ENCODE measurements at regions of chr1 and their contacts with region 1.

Region 1: DNA sequence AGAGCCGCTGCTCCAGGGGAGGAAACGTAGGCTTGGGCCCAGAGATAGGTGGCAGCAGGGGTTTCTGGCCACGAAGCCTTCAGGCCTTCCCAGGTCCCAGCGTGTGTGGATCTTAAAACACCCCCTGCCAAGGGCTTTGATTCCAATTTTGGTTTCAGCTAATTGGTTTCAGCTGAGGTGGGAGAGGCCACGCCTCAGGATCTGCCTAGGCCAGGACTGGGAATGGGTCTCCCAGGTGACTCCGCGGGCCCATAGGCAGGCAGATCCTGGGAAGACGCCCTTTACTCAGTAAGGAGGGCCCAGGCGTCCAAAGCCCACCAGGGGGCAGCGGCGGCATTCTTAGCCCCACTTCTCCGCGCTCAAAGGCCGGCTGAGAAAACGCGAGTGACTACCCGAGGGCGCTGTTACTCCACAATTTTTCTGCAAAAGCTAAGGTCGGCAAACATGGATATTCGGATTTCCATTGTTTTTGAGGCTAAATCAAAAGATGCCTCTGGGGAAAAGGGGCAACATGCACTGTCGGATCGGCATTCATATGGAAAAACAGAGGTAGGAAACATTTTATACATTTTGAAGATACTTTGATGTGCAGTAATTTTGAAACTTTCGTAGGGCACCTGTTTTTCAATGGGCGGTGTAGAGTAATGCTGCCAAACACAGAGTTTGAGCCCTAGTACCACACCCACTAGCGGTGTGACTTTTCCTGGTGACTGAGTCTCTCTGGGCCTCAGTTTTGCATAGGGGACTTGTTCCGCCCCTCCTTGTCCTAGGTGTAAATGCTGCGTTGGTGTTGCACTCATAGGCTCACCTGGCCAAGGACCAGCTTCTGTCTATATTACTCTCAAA is 31.8 kb upstream of the BCL10 start:
- DNase-seq: peak; percentile 82
- H3K4me3 ChIP-seq: no peak overlapping the region
- CTCF ChIP-seq: peak; percentile 98

Region 2: DNA sequence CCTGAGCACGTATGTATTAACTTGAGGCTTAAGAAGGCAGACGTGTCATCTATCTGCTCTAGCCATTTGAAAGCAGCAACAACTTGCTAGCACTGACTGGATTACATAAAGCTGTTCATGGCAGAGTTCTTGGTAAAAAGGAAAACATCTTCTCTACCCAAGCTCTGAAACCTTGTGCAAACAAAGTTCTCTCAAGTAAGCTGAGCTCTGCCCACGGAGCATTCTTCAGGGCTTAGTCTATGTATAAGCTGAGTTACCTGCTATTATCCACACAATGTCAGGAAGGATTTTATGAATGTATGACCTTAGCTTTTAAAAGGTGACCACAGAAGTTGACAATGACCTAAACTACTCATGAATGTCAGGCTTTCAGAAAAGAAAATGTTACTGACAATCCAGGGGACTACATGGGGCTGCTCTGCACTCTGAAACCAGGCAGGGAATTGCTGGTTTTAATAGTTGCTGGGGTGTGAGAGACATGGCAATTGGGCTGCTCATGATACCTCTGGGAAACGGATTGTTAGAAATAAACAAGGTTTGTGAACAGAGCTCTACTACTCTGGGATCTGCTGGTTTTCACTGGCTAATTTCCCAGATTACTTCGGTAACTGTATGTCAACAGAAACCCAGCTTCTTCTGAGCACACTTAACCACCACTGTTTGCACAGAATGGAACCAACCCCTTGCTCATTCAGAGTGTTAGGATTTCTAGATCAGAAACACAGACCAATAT is 242.7 kb after region 1 on chr1:
- in situ Hi-C with region 1: loop called (anchors 25 kb)
- DNase-seq: peak; percentile 59
- H3K4me3 ChIP-seq: no peak overlapping the region
- CTCF ChIP-seq: no peak

Region 3: DNA sequence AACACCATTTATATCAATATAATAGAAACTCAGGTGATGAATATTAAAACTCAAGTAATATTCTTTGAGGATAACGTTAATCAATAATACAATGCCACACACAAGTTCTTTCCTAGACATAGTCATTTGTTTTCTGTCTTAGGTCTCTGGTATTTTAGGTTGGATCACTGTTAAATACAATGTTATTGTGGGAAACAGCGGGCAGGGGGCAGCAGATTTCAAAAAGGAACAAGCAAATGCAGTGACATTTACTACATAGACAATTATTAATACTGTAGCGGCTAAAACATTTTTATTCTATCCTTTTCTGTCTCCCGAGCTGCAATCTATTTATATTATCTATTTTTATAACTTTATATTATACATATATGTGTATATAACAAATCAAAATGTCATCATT is 586.4 kb after region 1 on chr1:
- in situ Hi-C with region 1: loop called (anchors 25 kb)
- DNase-seq: peak; percentile 31
- H3K4me3 ChIP-seq: no peak overlapping the region
- CTCF ChIP-seq: peak; percentile 67

Region 4: GRCh38 chr1:86068271-86068721 is 760.1 kb after region 1 on chr1:
- in situ Hi-C with region 1: no loop called
- DNase-seq: no peak
- H3K4me3 ChIP-seq: no peak overlapping the region
- CTCF ChIP-seq: no peak

Measured in astrocyte of the cerebellum (primary cell).